GM18951 (cell line): ENCODE measurements at regions of chr2 and their contacts with region 1.

Region 1: DNA sequence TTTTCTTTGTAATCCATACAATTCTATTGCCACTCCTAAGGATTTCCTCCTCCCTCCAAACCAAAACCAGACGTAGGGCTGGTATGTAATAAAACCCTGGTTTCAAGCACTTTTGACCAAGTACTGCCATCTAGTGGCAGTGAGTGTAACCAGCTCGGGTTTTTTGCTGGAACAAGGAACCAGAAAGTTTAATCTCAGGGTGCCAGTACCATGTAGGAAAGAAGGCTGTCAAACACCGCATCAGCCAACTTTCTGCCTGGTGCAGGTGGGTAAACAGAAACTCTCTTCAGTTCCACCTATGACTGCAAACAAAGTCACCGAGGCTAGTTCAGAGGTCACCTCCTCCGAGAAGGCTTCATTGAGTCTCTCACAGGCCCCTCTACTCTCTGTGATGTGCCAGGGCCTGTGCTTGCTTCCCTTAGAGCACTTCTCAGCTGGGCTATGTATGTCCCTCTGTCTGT is 10.2 kb upstream of the THNSL2 start:
- POLR2A ChIP-seq: no peak

Region 2: GRCh38 chr2:86815611-86816010 is 1344.4 kb before region 1 on chr2:
- in situ Hi-C with region 1: no loop called
- POLR2A ChIP-seq: no peak

Region 3: DNA sequence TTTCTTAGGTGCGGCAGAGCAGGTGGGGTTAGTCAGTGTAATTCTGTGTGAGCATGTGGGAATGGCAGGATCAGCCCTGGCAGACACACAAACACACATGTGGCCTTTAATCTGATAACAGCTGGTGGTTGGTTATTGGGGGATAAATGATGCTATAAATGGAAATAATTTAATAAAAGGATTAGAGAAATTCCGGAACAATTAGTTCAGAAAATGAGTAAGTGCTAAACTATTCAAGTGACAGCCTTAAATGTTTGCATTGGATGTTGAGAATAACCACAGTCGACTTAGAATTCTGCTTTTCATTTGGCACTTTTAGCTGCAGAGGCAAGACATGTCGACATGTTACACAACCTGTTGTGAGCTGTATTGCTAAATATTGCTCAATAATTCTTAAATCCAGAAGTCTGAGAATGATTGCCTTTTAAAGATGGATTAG is 85.1 kb before region 1 on chr2:
- in situ Hi-C with region 1: loop called (anchors 10 kb)
- POLR2A ChIP-seq: no peak